CD4-positive, alpha-beta T cell (primary cell): ENCODE measurements at regions of chr17 and their contacts with region 1.

Region 1: GRCh38 chr17:76264755-76265596 is at the start of gene UBALD2:
- DNase-seq: peak; percentile 96 to 99 (median 98)
- ATAC-seq: peak; percentile 80
- H3K4me3 ChIP-seq: peak within 1 kb of the TSS; percentile 73
- H3K4me3 Mint-ChIP-seq: peak within 1 kb of the TSS; percentile 93
- H3K27ac ChIP-seq: peak within 1 kb of the TSS; percentile 77 to 91
- H3K27ac Mint-ChIP-seq: peak within 1 kb of the TSS; percentile 98
- H3K4me1 ChIP-seq: peaks cover 70% of the 10 kb centered on the region
- H3K4me1 Mint-ChIP-seq: peaks cover 64% of the 10 kb centered on the region
- H3K27me3 ChIP-seq: no peaks in the 10 kb centered on the region
- H3K27me3 Mint-ChIP-seq: no peaks in the 10 kb centered on the region
- CTCF ChIP-seq: no peak
- total RNA-seq, gene UBALD2: 253 to 265 TPM

Region 2: GRCh38 chr17:75877752-75878173 is 387.2 kb before region 1 on chr17:
- CTCF ChIA-PET with region 1: no interaction called
- POLR2A ChIA-PET with region 1: no interaction called
- intact Hi-C with region 1: no loop called
- DNase-seq: peak; percentile 52 to 90 (median 66)
- ATAC-seq: peak; percentile 72
- H3K4me3 ChIP-seq: peak overlapping the region; percentile 60
- H3K4me3 Mint-ChIP-seq: peak overlapping the region; percentile 91
- H3K27ac ChIP-seq: peak overlapping the region; percentile 15 to 66
- H3K27ac Mint-ChIP-seq: peak overlapping the region; percentile 91
- H3K4me1 ChIP-seq: peaks cover 64% of the 10 kb centered on the region
- H3K4me1 Mint-ChIP-seq: peaks cover 51% of the 10 kb centered on the region
- H3K27me3 ChIP-seq: no peaks in the 10 kb centered on the region
- H3K27me3 Mint-ChIP-seq: no peaks in the 10 kb centered on the region
- CTCF ChIP-seq: peak; percentile 70

Region 3: GRCh38 chr17:76121932-76122430 is 143.0 kb before region 1 on chr17:
- CTCF ChIA-PET with region 1: interaction called, 29 read pairs
- POLR2A ChIA-PET with region 1: interaction called, 11 read pairs
- intact Hi-C with region 1: no loop called
- DNase-seq: peak in 3 of 14 experiments; percentile 21 to 49 (median 41)
- ATAC-seq: peak; percentile 12
- H3K4me3 ChIP-seq: peak overlapping the region; percentile 52
- H3K4me3 Mint-ChIP-seq: no peak overlapping the region
- H3K27ac ChIP-seq: no peak overlapping the region
- H3K27ac Mint-ChIP-seq: peak overlapping the region; percentile 42
- H3K4me1 ChIP-seq: peaks cover 31% of the 10 kb centered on the region
- H3K4me1 Mint-ChIP-seq: peaks cover 17% of the 10 kb centered on the region
- H3K27me3 ChIP-seq: no peaks in the 10 kb centered on the region
- H3K27me3 Mint-ChIP-seq: no peaks in the 10 kb centered on the region
- CTCF ChIP-seq: no peak

Region 4: DNA sequence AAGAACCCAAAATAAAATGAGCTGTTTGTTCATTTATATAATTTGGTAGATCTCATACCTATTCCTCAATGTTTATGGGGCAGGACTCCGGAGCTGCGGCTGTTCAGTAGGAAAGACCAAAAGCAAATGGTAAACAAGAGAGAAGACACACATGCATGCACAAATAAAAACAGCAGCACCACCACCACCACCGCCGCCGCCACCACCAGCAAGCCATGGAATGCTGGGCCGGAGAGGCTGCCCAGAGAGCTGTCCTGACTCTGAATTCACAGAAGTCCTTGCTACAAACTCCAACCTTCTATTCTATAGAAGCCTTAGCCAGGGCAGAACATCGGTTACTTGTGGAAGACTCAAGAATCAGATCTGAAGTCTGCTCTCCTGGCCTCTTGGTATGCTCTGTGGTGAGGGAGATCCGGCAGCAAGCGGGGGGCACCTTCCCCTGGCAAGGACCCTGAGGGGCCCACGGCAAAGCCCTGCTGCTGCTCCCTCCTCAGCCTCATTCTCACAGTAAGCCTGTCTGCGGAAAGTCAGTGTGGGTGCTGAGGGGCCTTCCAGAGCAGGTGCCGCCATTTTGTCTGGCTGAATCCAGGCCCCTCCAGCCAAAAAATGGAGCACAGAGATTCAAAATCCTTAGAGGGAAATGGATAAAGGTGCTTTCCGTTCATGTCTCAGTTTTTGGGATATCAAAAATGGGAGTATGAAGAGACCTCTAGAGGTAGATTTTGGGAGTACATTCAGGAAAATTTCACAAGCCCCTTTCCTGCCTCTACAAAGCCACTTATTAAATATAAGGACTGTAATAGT is 117.6 kb before region 1 on chr17:
- CTCF ChIA-PET with region 1: no interaction called
- POLR2A ChIA-PET with region 1: interaction called, 20 read pairs
- intact Hi-C with region 1: loop called in 1 of 2 experiments (anchors 5 kb)
- DNase-seq: no peak
- ATAC-seq: no peak
- H3K4me3 ChIP-seq: no peak overlapping the region
- H3K4me3 Mint-ChIP-seq: no peak overlapping the region
- H3K27ac ChIP-seq: peak overlapping the region in 1 of 2 donors; percentile 84
- H3K27ac Mint-ChIP-seq: peak overlapping the region; percentile 97
- H3K4me1 ChIP-seq: peaks cover 70% of the 10 kb centered on the region
- H3K4me1 Mint-ChIP-seq: peaks cover 81% of the 10 kb centered on the region
- H3K27me3 ChIP-seq: no peaks in the 10 kb centered on the region
- H3K27me3 Mint-ChIP-seq: no peaks in the 10 kb centered on the region
- CTCF ChIP-seq: no peak

Region 5: GRCh38 chr17:76182016-76182764 is 82.8 kb before region 1 on chr17:
- CTCF ChIA-PET with region 1: interaction called, 23 read pairs
- POLR2A ChIA-PET with region 1: interaction called, 221 read pairs
- intact Hi-C with region 1: no loop called
- DNase-seq: peak; percentile 89 to 97 (median 95)
- ATAC-seq: peak; percentile 73
- H3K4me3 ChIP-seq: no peak overlapping the region
- H3K4me3 Mint-ChIP-seq: peak overlapping the region; percentile 75
- H3K27ac ChIP-seq: no peak overlapping the region
- H3K27ac Mint-ChIP-seq: peak overlapping the region; percentile 92
- H3K4me1 ChIP-seq: peaks cover 72% of the 10 kb centered on the region
- H3K4me1 Mint-ChIP-seq: peaks cover 60% of the 10 kb centered on the region
- H3K27me3 ChIP-seq: no peaks in the 10 kb centered on the region
- H3K27me3 Mint-ChIP-seq: no peaks in the 10 kb centered on the region
- CTCF ChIP-seq: peak; percentile 86

Region 6: DNA sequence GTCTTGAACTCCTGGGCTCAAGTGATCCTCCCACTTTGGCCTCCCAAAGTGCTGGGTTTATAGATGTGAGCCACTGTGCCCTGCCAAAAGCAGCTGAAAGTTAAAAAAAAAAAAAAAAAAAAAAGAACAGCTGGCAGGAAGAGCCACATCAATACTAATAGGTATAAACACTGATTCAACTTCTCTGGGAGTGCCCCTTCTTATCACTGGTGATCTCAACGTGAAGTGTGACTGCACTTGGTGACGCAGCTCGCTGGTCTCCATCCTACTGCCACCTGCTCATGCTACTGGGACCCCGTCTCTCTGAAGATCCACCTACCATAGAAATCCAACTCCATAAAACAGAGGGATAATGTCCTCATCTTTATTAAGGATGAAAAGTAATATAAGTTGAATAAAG is 65.5 kb before region 1 on chr17:
- CTCF ChIA-PET with region 1: interaction called, 3 read pairs
- POLR2A ChIA-PET with region 1: interaction called, 18 read pairs
- intact Hi-C with region 1: loop called in 1 of 2 experiments (anchors 1 kb)
- DNase-seq: peak; percentile 39 to 93 (median 64)
- ATAC-seq: peak; percentile 98
- H3K4me3 ChIP-seq: no peak overlapping the region
- H3K4me3 Mint-ChIP-seq: peak overlapping the region; percentile 81
- H3K27ac ChIP-seq: peak overlapping the region in 1 of 2 donors; percentile 58
- H3K27ac Mint-ChIP-seq: peak overlapping the region; percentile 93
- H3K4me1 ChIP-seq: peaks cover 67% of the 10 kb centered on the region
- H3K4me1 Mint-ChIP-seq: peaks cover 71% of the 10 kb centered on the region
- H3K27me3 ChIP-seq: no peaks in the 10 kb centered on the region
- H3K27me3 Mint-ChIP-seq: no peaks in the 10 kb centered on the region
- CTCF ChIP-seq: no peak

Region 7: DNA sequence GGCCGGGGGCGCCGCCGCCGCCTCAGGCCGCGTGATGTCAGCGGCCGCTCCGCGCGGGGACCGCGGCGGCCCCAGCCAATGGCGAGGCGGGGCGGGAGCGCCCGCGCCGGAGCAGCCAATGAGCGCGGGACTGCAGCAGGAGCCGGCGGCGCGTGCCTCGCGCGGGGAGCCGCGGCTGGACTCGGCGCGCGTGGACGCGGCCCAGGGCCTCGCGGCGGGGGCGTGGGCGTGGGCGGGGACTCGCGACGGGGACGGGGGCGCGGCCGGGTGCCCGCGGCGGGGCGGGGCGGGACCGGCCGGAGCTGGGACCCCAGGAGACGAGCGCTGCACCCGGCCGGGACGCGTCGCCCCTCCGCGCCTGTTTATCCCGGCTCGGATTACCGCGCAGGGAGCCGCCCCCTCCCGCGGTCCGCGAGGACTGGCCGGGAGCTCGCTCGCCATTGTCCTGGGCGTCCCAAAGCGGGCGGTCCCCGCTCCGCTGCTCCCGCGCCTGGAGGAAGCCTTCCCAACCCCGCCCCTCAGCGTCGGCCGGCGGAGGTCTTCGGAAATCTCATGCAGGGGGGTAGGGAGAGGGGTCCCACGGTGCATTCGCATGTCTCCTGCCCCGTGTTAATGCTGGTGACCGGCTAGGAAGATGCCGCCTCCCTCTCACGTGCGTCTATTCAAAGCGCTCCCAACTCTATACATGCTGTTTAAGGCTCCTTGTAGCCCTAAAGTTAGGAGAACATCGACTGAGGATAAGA is 24.3 kb before region 1 on chr17 and contains the start of gene RNF157:
- CTCF ChIA-PET with region 1: interaction called, 5 read pairs
- POLR2A ChIA-PET with region 1: interaction called, 394 read pairs
- intact Hi-C with region 1: loop called (anchors 1 to 2 kb)
- DNase-seq: peak; percentile 39 to 90 (median 64)
- ATAC-seq: peak; percentile 91
- H3K4me3 ChIP-seq: peak within 1 kb of the TSS; percentile 86
- H3K4me3 Mint-ChIP-seq: peak within 1 kb of the TSS; percentile 89
- H3K27ac ChIP-seq: peak within 1 kb of the TSS; percentile 35 to 36
- H3K27ac Mint-ChIP-seq: peak within 1 kb of the TSS; percentile 77
- H3K4me1 ChIP-seq: peaks cover 66% of the 10 kb centered on the region
- H3K4me1 Mint-ChIP-seq: peaks cover 54% of the 10 kb centered on the region
- H3K27me3 ChIP-seq: no peaks in the 10 kb centered on the region
- H3K27me3 Mint-ChIP-seq: no peaks in the 10 kb centered on the region
- CTCF ChIP-seq: no peak
- total RNA-seq, gene RNF157: 18.5 to 21.1 TPM

Region 8: GRCh38 chr17:76278952-76279741 is 14.2 kb after region 1 on chr17:
- CTCF ChIA-PET with region 1: interaction called, 21 read pairs
- POLR2A ChIA-PET with region 1: interaction called, 28 read pairs
- intact Hi-C with region 1: no loop called
- DNase-seq: peak; percentile 74 to 91 (median 84)
- ATAC-seq: peak; percentile 89
- H3K4me3 ChIP-seq: no peak overlapping the region
- H3K4me3 Mint-ChIP-seq: no peak overlapping the region
- H3K27ac ChIP-seq: no peak overlapping the region
- H3K27ac Mint-ChIP-seq: no peak overlapping the region
- H3K4me1 ChIP-seq: peaks cover 31% of the 10 kb centered on the region
- H3K4me1 Mint-ChIP-seq: peaks cover 13% of the 10 kb centered on the region
- H3K27me3 ChIP-seq: no peaks in the 10 kb centered on the region
- H3K27me3 Mint-ChIP-seq: no peaks in the 10 kb centered on the region
- CTCF ChIP-seq: peak; percentile 98